ENCODE measurements at regions of chr10 and their contacts with region 1.

Region 1: GRCh38 chr10:74738985-74739567 is 87.3 kb upstream of the KAT6B start:
- DNase-seq: peak; percentile 56
- CTCF ChIP-seq: peak; percentile 57

Region 2: GRCh38 chr10:74460812-74461211 is 278.3 kb before region 1 on chr10:
- in situ Hi-C with region 1: no loop called
- DNase-seq: no peak
- CTCF ChIP-seq: no peak

Region 3: DNA sequence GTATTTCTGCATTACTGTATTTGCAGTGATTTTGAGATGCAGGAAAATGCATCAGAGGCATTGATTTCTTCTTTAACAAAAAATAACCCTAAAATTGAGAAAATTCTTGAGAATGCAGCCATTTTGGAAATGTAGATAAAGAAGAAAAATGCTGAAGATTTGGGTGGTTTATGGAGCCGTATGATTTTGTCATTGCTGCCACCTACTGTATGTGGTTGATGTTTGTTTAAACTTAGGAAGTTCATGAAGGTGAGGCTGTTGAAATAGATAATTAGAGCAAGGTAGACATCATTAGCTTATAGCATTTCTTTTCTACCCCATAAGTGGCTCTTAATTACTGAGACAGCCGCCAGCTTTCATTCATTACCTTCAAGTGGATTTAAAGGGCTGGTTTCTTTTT is 280.3 kb after region 1 on chr10:
- in situ Hi-C with region 1: loop called (anchors 25 kb)
- DNase-seq: no peak
- CTCF ChIP-seq: peak; percentile 59

Measured in GM13977 (cell line).